ENCODE measurements at regions of chr9 and their contacts with region 1.

Region 1: DNA sequence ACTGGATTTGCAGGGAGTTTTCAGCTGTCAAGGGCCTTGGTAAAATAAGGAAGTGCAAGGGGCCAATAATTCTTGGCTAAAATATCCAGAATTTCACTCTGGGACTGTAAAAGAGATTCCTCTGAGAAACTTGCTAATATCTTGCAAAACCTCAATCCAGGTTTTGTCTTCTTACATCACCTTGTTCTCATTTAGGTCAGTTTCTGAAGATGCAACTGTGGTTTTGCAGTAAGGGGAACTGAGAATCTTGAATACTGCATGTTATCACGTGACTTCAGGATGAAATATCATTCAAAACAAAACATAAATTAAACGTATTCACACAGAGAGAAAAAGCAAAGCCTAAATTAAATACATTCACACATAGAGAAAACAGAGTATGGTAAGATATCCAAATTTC is 35.0 kb upstream of the RIC1 start:
- DNase-seq: no peak
- H3K4me3 ChIP-seq: no peak overlapping the region
- H3K27ac ChIP-seq: no peak overlapping the region
- H3K4me1 ChIP-seq: no peaks in the 10 kb centered on the region
- H3K27me3 ChIP-seq: no peaks in the 10 kb centered on the region
- CTCF ChIP-seq: no peak
- EP300 ChIP-seq: no peak
- POLR2A ChIP-seq: no peak

Region 2: GRCh38 chr9:4762108-4762885 is 831.6 kb before region 1 on chr9:
- intact Hi-C with region 1: loop called (anchors 5 kb)
- DNase-seq: peak; percentile 84
- H3K4me3 ChIP-seq: peak overlapping the region in 2 of 4 donors; percentile 4 to 10
- H3K27ac ChIP-seq: peak overlapping the region in 2 of 4 donors; percentile 2 to 46
- H3K4me1 ChIP-seq: peaks cover 0 to 8% (median 5%) of the 10 kb centered on the region in 4 donors
- H3K27me3 ChIP-seq: peaks cover 0 to 12% (median 0%) of the 10 kb centered on the region in 3 donors
- CTCF ChIP-seq: peak; percentile 37 to 89 (median 72)
- EP300 ChIP-seq: no peak
- POLR2A ChIP-seq: no peak

Region 3: GRCh38 chr9:5186416-5187169 is 407.3 kb before region 1 on chr9:
- intact Hi-C with region 1: loop called (anchors 10 kb)
- DNase-seq: no peak
- H3K4me3 ChIP-seq: no peak overlapping the region
- H3K27ac ChIP-seq: no peak overlapping the region
- H3K4me1 ChIP-seq: no peaks in the 10 kb centered on the region
- H3K27me3 ChIP-seq: no peaks in the 10 kb centered on the region
- CTCF ChIP-seq: peak in 3 of 4 experiments; percentile 22 to 41 (median 31)
- EP300 ChIP-seq: no peak
- POLR2A ChIP-seq: no peak

Measured in sigmoid colon (tissue), 7 donors.